Activated B cell treated with CpG ODN at 0.5 μM for 24 hours (primary cell): ENCODE measurements at regions of chr17 and their contacts with region 1.

Region 1: DNA sequence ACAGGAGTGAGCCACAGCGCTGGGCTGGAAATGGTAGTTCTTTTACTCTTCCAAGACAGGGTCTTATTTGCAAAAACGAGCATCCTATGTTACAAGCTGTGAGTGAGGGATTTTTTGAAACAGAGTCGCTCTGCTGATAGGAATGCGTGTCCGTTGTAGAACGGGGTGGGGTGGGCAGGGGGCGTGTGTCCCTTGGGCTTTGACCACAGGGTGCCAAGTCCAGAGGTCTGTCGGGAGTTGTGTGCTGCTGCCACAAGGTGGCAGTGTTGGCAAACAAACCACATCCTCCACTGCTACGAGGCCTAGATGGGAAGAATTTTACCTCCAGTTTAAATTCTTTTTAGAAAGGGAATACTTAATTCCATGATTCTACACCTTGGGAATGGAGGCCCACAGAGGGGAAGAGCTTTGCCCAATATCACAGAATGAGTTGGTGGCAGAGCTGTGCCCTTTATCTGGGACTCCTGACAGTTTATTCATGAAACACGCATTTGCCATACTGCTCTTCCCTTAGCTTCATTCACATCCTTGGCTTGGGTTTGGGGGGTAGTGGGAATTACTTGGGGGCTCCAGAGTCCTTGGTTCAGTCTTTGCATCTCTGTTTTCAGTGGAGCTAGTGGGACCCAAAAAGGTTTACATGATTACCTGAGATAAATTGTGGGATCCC is 30.6 kb upstream of the ETV4 start:
- DNase-seq: peak; percentile 53
- ATAC-seq: peak; percentile 21
- H3K4me3 Mint-ChIP-seq: no peak overlapping the region
- H3K27ac Mint-ChIP-seq: peak overlapping the region; percentile 46
- H3K4me1 Mint-ChIP-seq: peaks cover 23% of the 10 kb centered on the region
- H3K27me3 Mint-ChIP-seq: peaks cover 4% of the 10 kb centered on the region
- CTCF ChIP-seq: no peak

Region 2: DNA sequence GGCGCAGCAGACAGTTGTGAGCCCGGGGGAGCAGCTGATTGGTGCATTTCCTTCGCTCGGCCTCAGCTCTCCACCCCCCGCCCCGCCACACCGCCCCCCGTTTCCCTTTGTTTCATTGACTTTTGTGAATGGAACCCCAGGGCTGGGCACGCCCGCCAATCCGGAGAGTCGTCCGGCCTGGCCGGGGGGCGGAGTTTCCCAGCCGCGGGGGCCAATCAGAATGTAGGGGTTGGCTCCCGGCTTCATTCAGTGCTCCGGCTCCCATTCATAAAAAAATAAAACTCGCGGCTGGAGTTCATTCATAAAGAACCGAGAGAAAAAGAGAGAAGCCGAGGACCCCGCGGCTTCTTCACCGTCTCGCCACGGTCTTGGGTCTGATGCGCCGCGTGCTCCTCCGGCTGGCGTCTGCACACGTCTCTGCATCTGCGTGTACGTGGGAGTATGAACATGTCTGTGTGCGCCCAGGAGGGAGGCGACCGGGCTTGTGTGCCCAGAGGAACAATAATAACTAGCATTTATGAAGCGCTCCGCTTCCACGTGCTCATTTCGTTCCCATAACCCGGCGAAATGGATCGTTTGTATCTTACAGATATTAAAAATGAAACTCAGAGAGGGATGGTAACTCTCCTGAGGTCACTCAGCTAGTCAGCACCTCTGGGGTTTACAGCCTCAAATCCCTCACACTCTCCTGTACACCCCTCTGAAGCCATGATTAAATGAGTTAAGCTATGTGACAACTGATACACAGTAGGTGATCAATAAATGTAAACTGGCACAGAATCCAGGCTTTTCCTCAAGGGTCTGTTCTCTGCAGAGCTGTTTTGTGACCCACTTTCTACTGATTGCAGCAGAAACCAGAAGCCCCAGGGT is 30.1 kb before region 1 on chr17 and contains the start of gene ETV4:
- CTCF ChIA-PET with region 1: interaction called, 5 read pairs
- POLR2A ChIA-PET with region 1: no interaction called
- intact Hi-C with region 1: loop called (anchors 1 kb)
- DNase-seq: peak; percentile 75
- ATAC-seq: peak; percentile 92
- H3K4me3 Mint-ChIP-seq: peak within 1 kb of the TSS; percentile 82
- H3K27ac Mint-ChIP-seq: no peak within 1 kb of the TSS
- H3K4me1 Mint-ChIP-seq: peaks cover 20% of the 10 kb centered on the region
- H3K27me3 Mint-ChIP-seq: peaks cover 46% of the 10 kb centered on the region
- CTCF ChIP-seq: no peak
- total RNA-seq, gene ETV4: 0.10 TPM in 1 of 2 replicates, not detected in the other

Region 3: GRCh38 chr17:43628089-43628650 is 51.5 kb after region 1 on chr17:
- CTCF ChIA-PET with region 1: no interaction called
- POLR2A ChIA-PET with region 1: no interaction called
- intact Hi-C with region 1: no loop called
- DNase-seq: no peak
- ATAC-seq: no peak
- H3K4me3 Mint-ChIP-seq: no peak overlapping the region
- H3K27ac Mint-ChIP-seq: no peak overlapping the region
- H3K4me1 Mint-ChIP-seq: no peaks in the 10 kb centered on the region
- H3K27me3 Mint-ChIP-seq: peaks cover 14% of the 10 kb centered on the region
- CTCF ChIP-seq: no peak

Region 4: GRCh38 chr17:43673516-43674323 is 97.0 kb after region 1 on chr17:
- CTCF ChIA-PET with region 1: no interaction called
- POLR2A ChIA-PET with region 1: interaction called, 6 read pairs
- intact Hi-C with region 1: loop called (anchors 1 kb)
- DNase-seq: peak; percentile 65
- ATAC-seq: peak; percentile 71
- H3K4me3 Mint-ChIP-seq: no peak overlapping the region
- H3K27ac Mint-ChIP-seq: no peak overlapping the region
- H3K4me1 Mint-ChIP-seq: peaks cover 7% of the 10 kb centered on the region
- H3K27me3 Mint-ChIP-seq: peaks cover 5% of the 10 kb centered on the region
- CTCF ChIP-seq: no peak

Region 5: DNA sequence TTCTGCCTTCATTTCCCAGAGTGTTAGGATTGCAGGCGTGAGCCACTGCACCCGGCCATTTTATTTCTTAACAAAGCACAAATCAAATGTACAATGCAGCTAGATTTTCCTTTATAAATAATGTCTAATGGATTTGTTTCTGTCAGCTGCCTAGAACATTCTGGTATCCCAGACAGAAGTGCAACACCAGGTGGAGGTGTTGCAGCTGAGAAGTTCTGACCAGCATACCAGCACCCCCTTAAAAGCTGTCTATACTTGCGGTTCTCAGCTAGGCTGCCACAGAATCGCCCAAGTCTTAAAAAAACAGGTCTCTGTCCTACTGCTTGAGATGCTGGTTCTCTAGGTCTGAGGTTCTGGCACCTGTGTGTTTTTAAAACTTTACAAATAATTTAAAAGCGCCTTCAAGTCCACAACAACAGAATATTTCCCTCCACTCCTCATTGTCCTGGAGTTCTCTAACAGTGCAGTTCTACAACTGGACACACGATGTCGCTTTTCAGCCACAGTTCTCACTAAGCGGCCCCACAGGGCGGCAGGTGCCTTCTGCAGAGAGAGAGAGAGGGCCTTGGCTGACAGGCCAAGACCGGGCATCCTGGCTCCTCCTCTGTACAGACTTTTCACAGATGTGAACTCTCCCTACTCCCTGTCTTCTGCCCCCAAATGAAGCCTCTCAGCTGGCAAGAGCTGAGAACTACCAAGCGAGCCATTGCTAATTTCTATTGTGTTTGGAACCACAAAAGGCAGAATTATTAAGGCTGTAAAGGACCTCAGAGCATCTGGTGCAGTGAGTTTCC is 117.6 kb after region 1 on chr17:
- CTCF ChIA-PET with region 1: interaction called, 33 read pairs
- POLR2A ChIA-PET with region 1: no interaction called
- intact Hi-C with region 1: loop called (anchors 1 kb)
- DNase-seq: peak; percentile 42
- ATAC-seq: peak; percentile 99
- H3K4me3 Mint-ChIP-seq: no peak overlapping the region
- H3K27ac Mint-ChIP-seq: no peak overlapping the region
- H3K4me1 Mint-ChIP-seq: no peaks in the 10 kb centered on the region
- H3K27me3 Mint-ChIP-seq: peaks cover 16% of the 10 kb centered on the region
- CTCF ChIP-seq: peak; percentile 85

Region 6: DNA sequence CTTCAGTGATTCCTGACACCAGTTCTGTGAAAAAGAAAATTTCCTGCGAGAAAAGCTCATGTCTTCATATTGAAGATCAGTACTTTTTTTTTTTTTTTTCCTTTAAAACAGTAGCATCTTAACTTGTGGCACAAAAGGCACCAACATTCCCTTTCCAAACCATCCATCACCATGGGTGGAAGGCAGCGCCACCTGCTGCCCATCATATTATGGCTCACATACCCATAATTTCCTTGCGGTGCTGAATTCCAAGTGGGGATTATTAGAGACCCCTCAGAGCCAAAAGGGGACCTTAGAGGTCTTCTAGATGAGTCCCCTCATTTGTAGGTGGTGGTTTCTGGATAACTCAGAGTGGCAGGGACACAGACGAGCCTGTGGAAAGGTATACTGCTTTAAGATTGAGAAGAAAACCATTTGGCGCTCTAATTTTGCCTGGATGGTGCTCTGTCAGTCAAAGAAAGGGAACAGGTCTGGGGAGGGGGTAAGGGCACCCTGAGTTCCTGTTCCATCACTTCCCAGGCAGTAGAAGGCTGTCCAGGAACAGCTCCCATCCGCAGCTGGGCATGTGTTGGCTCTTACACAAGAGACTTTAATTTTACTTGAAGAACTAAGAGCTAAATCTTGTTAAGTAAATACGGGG is 189.8 kb after region 1 on chr17:
- CTCF ChIA-PET with region 1: interaction called, 40 read pairs
- POLR2A ChIA-PET with region 1: no interaction called
- intact Hi-C with region 1: no loop called
- DNase-seq: no peak
- ATAC-seq: no peak
- H3K4me3 Mint-ChIP-seq: no peak overlapping the region
- H3K27ac Mint-ChIP-seq: no peak overlapping the region
- H3K4me1 Mint-ChIP-seq: peaks cover 14% of the 10 kb centered on the region
- H3K27me3 Mint-ChIP-seq: peaks cover 2% of the 10 kb centered on the region
- CTCF ChIP-seq: no peak

Region 7: GRCh38 chr17:43871951-43872695 is 295.4 kb after region 1 on chr17:
- CTCF ChIA-PET with region 1: no interaction called
- POLR2A ChIA-PET with region 1: no interaction called
- intact Hi-C with region 1: no loop called
- DNase-seq: no peak
- ATAC-seq: no peak
- H3K4me3 Mint-ChIP-seq: no peak overlapping the region
- H3K27ac Mint-ChIP-seq: no peak overlapping the region
- H3K4me1 Mint-ChIP-seq: no peaks in the 10 kb centered on the region
- H3K27me3 Mint-ChIP-seq: peaks cover 24% of the 10 kb centered on the region
- CTCF ChIP-seq: no peak